Sigmoid colon (tissue), 7 donors: ENCODE measurements at regions of chr17 and their contacts with region 1.

Region 1: GRCh38 chr17:58324409-58325288 is 3.9 kb downstream of the TSPOAP1 start:
- DNase-seq: no peak
- H3K4me3 ChIP-seq: peak overlapping the region; percentile 60 to 94 (median 73)
- H3K27ac ChIP-seq: peak overlapping the region; percentile 65 to 80 (median 75)
- H3K4me1 ChIP-seq: peaks cover 0 to 26% (median 22%) of the 10 kb centered on the region in 4 donors
- H3K27me3 ChIP-seq: peaks cover 0 to 6% (median 0%) of the 10 kb centered on the region in 3 donors
- CTCF ChIP-seq: no peak
- EP300 ChIP-seq: no peak
- POLR2A ChIP-seq: no peak

Region 2: DNA sequence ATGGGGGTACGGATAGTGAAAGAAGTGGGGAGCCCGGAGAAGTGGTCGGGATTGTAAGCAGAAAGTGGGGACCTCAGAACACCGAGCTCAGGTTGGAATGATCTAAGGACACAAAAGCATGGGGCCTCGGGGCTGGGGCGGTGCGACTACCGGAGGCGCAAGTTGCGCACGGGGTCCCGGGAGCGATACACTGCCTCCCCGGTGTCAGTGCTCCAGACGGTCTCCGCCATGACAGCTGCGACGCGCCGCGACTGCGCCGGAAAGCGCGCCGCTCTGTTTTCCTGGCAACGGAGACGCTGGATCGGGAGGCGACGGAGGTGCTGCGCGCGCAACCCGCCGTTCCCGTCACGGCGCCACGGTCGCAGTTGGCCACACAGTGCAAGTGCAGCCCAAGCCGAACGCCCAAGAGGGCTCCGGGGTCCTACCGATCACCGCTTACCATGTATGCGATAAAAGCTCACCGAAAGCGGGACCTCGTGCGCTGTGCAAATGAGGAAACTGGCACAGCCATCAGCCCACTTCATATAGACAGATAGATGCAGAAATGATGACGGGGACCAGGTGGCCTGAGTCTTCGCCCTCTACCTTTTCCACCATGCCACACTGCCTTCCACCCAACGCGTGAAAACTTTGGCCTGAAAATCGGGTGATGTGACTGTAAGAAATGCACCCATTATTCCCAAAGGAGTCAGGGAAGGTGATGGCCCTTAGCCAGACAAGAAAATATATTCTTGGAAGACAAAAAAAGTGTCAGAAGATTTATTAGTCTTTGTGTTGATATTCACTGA is 105.5 kb before region 1 on chr17 and contains the start of gene MKS1:
- intact Hi-C with region 1: loop called (anchors 5 kb)
- DNase-seq: peak; percentile 97
- H3K4me3 ChIP-seq: peak within 1 kb of the TSS; percentile 62 to 82 (median 78)
- H3K27ac ChIP-seq: peak within 1 kb of the TSS; percentile 68 to 89 (median 80)
- H3K4me1 ChIP-seq: peaks cover 0 to 11% (median 5%) of the 10 kb centered on the region in 4 donors
- H3K27me3 ChIP-seq: no peaks in the 10 kb centered on the region
- CTCF ChIP-seq: peak; percentile 58 to 79 (median 71)
- EP300 ChIP-seq: no peak
- POLR2A ChIP-seq: peak in 1 of 2 donors; percentile 17
- total RNA-seq, gene MKS1: 6.1 to 11.0 (median 8.4) TPM

Region 3: GRCh38 chr17:58352014-58352842 is 27.6 kb after region 1 on chr17 and contains the start of gene SUPT4H1:
- intact Hi-C with region 1: loop called (anchors 2 kb)
- DNase-seq: peak; percentile 93
- H3K4me3 ChIP-seq: peak within 1 kb of the TSS; percentile 58 to 94 (median 92)
- H3K27ac ChIP-seq: peak within 1 kb of the TSS; percentile 95 to 98 (median 96)
- H3K4me1 ChIP-seq: peaks cover 0 to 22% (median 14%) of the 10 kb centered on the region in 4 donors
- H3K27me3 ChIP-seq: no peaks in the 10 kb centered on the region
- CTCF ChIP-seq: no peak
- EP300 ChIP-seq: peak in 1 of 4 donors; percentile 36
- POLR2A ChIP-seq: peak; percentile 33 to 66
- total RNA-seq, gene SUPT4H1: 50.5 to 65.3 (median 57.4) TPM

Region 4: GRCh38 chr17:58417300-58418092 is 92.8 kb after region 1 on chr17 and contains the start of gene RNF43:
- intact Hi-C with region 1: loop called (anchors 5 kb)
- DNase-seq: peak; percentile 95
- H3K4me3 ChIP-seq: peak within 1 kb of the TSS; percentile 23 to 42 (median 36)
- H3K27ac ChIP-seq: peak within 1 kb of the TSS; percentile 7 to 54 (median 48)
- H3K4me1 ChIP-seq: peaks cover 0 to 7% (median 2%) of the 10 kb centered on the region in 4 donors
- H3K27me3 ChIP-seq: no peaks in the 10 kb centered on the region
- CTCF ChIP-seq: peak; percentile 73 to 91 (median 73)
- EP300 ChIP-seq: no peak
- POLR2A ChIP-seq: peak in 1 of 2 donors; percentile 84
- total RNA-seq, gene RNF43: 0.14 to 0.33 (median 0.28) TPM in 3 of 4 donors, not detected in the other